ENCODE measurements at regions of chr6 and their contacts with region 1.

Region 1: DNA sequence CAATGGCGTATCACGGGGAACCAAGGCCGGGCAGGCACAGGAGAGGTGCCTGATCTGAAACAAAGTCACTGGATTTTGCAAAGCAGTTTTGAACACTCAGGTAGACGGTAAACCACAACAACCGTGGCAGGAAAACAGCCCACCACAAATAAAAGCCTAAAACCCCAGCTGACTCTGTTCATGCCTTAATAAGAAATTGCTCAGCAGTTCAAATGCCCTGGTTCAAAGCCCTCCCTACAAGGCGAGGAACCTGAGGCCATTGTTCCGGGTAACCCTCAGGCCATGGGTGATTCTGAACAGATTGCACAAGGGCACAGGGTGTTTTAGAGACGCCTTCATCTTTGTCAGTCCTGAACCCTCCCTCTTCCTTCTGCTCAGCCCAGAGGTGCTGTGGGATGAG is 114.1 kb downstream of the MAP3K7 start:
- DNase-seq: peak; percentile 57
- ATAC-seq: peak; percentile 45
- H3K4me3 Mint-ChIP-seq: peak overlapping the region; percentile 83
- H3K27ac Mint-ChIP-seq: peak overlapping the region; percentile 87
- H3K4me1 Mint-ChIP-seq: peaks cover 63% of the 10 kb centered on the region
- H3K27me3 Mint-ChIP-seq: no peaks in the 10 kb centered on the region

Region 2: DNA sequence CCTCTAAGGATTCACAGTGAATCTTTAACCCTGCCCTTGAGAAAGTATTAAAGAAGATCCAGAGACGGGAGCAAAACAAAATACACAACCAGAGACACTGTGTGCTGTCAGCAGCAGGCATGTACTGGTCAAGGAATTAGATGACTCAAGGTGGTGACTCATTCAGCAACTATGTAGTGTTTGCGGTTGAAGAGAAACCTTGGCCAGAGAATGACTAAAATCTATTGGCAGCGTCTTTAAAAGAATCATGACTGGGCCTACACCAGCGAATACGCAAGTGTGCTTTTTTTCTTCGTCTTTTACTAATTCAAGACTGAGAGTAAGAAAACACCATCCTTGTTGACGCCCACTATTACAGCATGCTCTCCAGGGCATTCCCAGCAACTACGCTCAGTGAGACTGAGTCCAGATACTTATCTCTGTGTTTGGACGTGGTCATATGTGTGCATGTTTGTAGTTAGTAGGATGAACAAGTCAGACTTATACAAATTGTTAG is 103.7 kb before region 1 on chr6:
- POLR2A ChIA-PET with region 1: no interaction called
- DNase-seq: no peak
- ATAC-seq: peak; percentile 58
- H3K4me3 Mint-ChIP-seq: no peak overlapping the region
- H3K27ac Mint-ChIP-seq: no peak overlapping the region
- H3K4me1 Mint-ChIP-seq: peaks cover 10% of the 10 kb centered on the region
- H3K27me3 Mint-ChIP-seq: peaks cover under 1% of the 10 kb centered on the region

Region 3: GRCh38 chr6:90403489-90404381 is 69.0 kb before region 1 on chr6:
- POLR2A ChIA-PET with region 1: interaction called, 21 read pairs
- DNase-seq: no peak
- ATAC-seq: no peak
- H3K4me3 Mint-ChIP-seq: peak overlapping the region; percentile 37
- H3K27ac Mint-ChIP-seq: peak overlapping the region; percentile 72
- H3K4me1 Mint-ChIP-seq: peaks cover 45% of the 10 kb centered on the region
- H3K27me3 Mint-ChIP-seq: no peaks in the 10 kb centered on the region

Region 4: GRCh38 chr6:90444160-90444714 is 28.5 kb before region 1 on chr6:
- POLR2A ChIA-PET with region 1: no interaction called
- DNase-seq: no peak
- ATAC-seq: peak; percentile 37
- H3K4me3 Mint-ChIP-seq: peak overlapping the region; percentile 14
- H3K27ac Mint-ChIP-seq: peak overlapping the region; percentile 53
- H3K4me1 Mint-ChIP-seq: peaks cover 24% of the 10 kb centered on the region
- H3K27me3 Mint-ChIP-seq: no peaks in the 10 kb centered on the region

Region 5: GRCh38 chr6:90458353-90459224 is 14.2 kb before region 1 on chr6:
- POLR2A ChIA-PET with region 1: interaction called, 20 read pairs
- DNase-seq: peak; percentile 68
- ATAC-seq: peak; percentile 87
- H3K4me3 Mint-ChIP-seq: peak overlapping the region; percentile 83
- H3K27ac Mint-ChIP-seq: peak overlapping the region; percentile 94
- H3K4me1 Mint-ChIP-seq: peaks cover 50% of the 10 kb centered on the region
- H3K27me3 Mint-ChIP-seq: no peaks in the 10 kb centered on the region

Region 6: DNA sequence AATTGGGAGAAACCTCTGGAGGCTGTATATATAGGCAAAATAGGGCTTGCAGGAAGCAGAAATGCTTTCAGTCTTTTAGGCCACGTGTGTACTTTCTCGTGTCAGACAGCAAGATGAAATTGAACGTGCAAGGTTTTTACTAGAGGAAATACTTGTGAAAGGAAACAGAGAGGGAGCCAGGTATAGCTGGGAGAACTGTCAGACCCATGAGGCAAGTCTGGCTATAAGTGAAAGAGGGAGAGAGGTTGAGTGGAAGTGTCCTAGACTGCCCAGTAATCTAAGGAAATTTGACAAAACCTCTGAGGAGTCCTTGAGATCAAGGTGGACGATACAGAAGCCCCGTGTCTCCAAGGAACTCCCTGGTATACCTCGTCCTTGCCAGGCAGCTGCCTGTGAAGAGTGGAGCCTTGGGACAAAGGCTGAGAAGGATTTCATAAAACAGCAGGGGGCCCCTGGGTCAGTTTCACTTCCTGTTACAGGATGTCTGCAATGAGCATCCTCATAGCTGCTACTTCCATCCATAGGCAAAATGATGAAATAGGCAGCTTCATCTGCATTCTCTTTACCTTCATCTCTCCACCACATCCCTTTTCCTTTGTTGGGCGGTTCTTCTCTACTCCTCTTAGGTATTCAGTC is 228.5 kb after region 1 on chr6:
- POLR2A ChIA-PET with region 1: no interaction called
- DNase-seq: no peak
- ATAC-seq: peak; percentile 65
- H3K4me3 Mint-ChIP-seq: peak overlapping the region; percentile 0
- H3K27ac Mint-ChIP-seq: no peak overlapping the region
- H3K4me1 Mint-ChIP-seq: peaks cover 9% of the 10 kb centered on the region
- H3K27me3 Mint-ChIP-seq: peaks cover 7% of the 10 kb centered on the region